Activated naive CD4-positive, alpha-beta T cell treated with anti-CD3 and anti-CD28 coated beads for 36 hours (primary cell): ENCODE measurements at regions of chr3 and their contacts with region 1.

Region 1: GRCh38 chr3:172595641-172596393 is 72.6 kb upstream of the TNFSF10 start:
- DNase-seq: peak; percentile 58
- H3K4me3 Mint-ChIP-seq: peak overlapping the region; percentile 77
- H3K27ac Mint-ChIP-seq: peak overlapping the region; percentile 91
- H3K4me1 Mint-ChIP-seq: peaks cover 55% of the 10 kb centered on the region
- H3K27me3 Mint-ChIP-seq: no peaks in the 10 kb centered on the region

Region 2: GRCh38 chr3:172332256-172333041 is 263.4 kb before region 1 on chr3:
- CTCF ChIA-PET with region 1: interaction called, 19 read pairs
- intact Hi-C with region 1: loop called (anchors 1 kb)
- DNase-seq: peak; percentile 72
- H3K4me3 Mint-ChIP-seq: no peak overlapping the region
- H3K27ac Mint-ChIP-seq: no peak overlapping the region
- H3K4me1 Mint-ChIP-seq: peaks cover 4% of the 10 kb centered on the region
- H3K27me3 Mint-ChIP-seq: no peaks in the 10 kb centered on the region

Region 3: GRCh38 chr3:172506094-172506493 is 89.7 kb before region 1 on chr3:
- CTCF ChIA-PET with region 1: interaction called, 29 read pairs
- intact Hi-C with region 1: no loop called
- DNase-seq: no peak
- H3K4me3 Mint-ChIP-seq: no peak overlapping the region
- H3K27ac Mint-ChIP-seq: peak overlapping the region; percentile 57
- H3K4me1 Mint-ChIP-seq: peaks cover 38% of the 10 kb centered on the region
- H3K27me3 Mint-ChIP-seq: no peaks in the 10 kb centered on the region

Region 4: GRCh38 chr3:172530566-172530965 is 65.3 kb before region 1 on chr3:
- CTCF ChIA-PET with region 1: interaction called, 46 read pairs
- intact Hi-C with region 1: loop called (anchors 1 kb)
- DNase-seq: peak; percentile 59
- H3K4me3 Mint-ChIP-seq: peak overlapping the region; percentile 22
- H3K27ac Mint-ChIP-seq: peak overlapping the region; percentile 75
- H3K4me1 Mint-ChIP-seq: peaks cover 22% of the 10 kb centered on the region
- H3K27me3 Mint-ChIP-seq: no peaks in the 10 kb centered on the region

Region 5: DNA sequence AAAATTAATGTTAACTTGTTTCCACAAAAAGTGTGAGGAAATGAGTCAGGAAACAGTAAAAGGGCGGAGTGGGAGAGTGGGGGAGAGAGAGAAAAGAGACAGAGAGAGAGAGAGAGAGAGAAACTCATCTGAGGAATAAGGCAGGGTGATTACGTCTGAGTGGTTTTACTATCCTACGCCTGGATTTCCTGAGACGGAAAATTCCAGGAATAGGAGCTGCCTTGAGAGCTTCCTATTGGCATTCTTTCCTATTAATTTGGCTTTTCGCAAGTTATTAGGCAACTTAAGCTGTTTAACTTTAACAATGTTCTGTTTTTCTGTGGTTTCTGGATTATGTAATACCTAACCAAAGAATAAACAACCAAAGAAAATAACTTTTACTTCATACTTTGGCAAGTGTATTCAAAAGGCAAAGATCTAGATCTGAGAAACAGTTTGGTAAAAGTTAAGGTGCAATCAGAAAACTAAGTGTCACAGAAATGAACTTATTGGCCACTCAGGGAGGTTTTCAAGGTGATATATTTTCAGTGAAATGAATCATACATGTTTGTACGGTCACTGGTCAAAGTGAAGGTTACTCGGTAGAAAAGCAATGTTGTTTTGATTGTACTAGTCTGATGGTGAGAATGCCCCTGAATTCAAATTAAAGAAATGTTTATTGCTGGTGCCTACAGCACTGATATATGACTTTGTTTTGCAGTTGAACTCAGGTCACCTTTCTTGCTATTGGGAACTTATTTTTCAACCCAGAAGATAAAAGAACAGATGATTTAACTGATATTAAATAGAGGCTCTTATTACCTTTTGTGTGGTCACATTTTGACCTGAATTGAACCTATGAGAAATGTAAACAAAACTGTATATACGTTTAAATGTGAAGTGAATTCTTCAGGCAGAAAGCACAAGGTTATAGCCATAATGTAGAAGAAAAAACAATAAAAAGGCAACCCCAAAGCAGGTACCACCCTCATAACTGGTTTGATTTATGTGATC is 32.6 kb before region 1 on chr3:
- CTCF ChIA-PET with region 1: interaction called, 24 read pairs
- intact Hi-C with region 1: loop called (anchors 1 kb)
- DNase-seq: peak; percentile 71
- H3K4me3 Mint-ChIP-seq: peak overlapping the region; percentile 11
- H3K27ac Mint-ChIP-seq: peak overlapping the region; percentile 82
- H3K4me1 Mint-ChIP-seq: peaks cover 37% of the 10 kb centered on the region
- H3K27me3 Mint-ChIP-seq: no peaks in the 10 kb centered on the region

Region 6: GRCh38 chr3:172616031-172616461 is 20.2 kb after region 1 on chr3:
- CTCF ChIA-PET with region 1: interaction called, 30 read pairs
- intact Hi-C with region 1: loop called (anchors 1 kb)
- DNase-seq: no peak
- H3K4me3 Mint-ChIP-seq: no peak overlapping the region
- H3K27ac Mint-ChIP-seq: no peak overlapping the region
- H3K4me1 Mint-ChIP-seq: peaks cover 18% of the 10 kb centered on the region
- H3K27me3 Mint-ChIP-seq: no peaks in the 10 kb centered on the region

Region 7: DNA sequence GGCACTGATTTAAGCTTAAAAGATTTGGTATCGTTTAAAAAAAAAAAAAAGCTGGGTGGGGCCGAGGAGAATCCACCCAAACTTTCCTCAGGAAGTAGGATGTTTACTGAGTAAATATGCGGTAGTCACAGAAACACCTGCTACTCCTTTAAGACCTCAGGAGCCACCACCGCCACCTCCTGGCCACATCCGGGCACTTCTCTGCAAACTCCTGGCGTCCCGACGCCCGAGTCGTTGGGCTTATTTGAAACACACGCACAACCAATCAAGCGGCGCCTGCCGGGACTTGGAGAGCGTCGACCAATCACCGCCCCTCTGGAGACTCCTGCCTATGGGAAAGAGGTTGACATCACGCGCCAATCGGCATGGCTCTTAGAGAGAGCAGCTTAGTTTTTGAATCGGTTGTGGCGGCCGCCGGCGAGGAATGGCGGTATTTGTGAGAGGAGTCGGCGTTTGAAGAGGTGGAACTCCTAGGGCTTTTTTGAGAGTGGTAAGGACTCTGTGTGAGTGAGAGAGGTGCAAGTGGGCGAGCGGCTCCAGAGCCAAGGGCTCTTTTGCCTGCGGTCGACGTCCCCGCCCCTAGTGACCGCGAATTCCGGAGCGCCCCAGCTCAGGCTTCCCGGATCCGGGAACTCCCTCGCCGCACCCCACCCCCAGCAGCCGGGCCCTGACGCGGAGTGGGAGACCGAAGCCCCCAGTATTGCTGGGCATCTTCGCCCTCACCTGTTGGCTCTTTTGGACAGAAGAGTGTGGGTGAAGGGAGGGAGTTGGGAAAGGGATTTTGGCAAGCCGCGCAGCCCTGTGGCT is 154.8 kb after region 1 on chr3 and contains the start of gene ECT2:
- CTCF ChIA-PET with region 1: no interaction called
- intact Hi-C with region 1: loop called (anchors 1 kb)
- DNase-seq: peak; percentile 100
- H3K4me3 Mint-ChIP-seq: peak within 1 kb of the TSS; percentile 99
- H3K27ac Mint-ChIP-seq: peak within 1 kb of the TSS; percentile 94
- H3K4me1 Mint-ChIP-seq: peaks cover 13% of the 10 kb centered on the region
- H3K27me3 Mint-ChIP-seq: no peaks in the 10 kb centered on the region
- total RNA-seq, gene ECT2: 55.3 to 59.4 TPM